AG04450 (cell line): ENCODE measurements at regions of chr12 and their contacts with region 1.

Region 1: GRCh38 chr12:49130151-49131050 is 794 bp downstream of the TUBA1B start:
- DNase-seq: peak; percentile 86
- H3K4me3 ChIP-seq: peak overlapping the region; percentile 90
- H3K27ac ChIP-seq: peak overlapping the region; percentile 98
- H3K27me3 ChIP-seq: no peaks in the 10 kb centered on the region
- CTCF ChIP-seq: peak; percentile 91

Region 2: DNA sequence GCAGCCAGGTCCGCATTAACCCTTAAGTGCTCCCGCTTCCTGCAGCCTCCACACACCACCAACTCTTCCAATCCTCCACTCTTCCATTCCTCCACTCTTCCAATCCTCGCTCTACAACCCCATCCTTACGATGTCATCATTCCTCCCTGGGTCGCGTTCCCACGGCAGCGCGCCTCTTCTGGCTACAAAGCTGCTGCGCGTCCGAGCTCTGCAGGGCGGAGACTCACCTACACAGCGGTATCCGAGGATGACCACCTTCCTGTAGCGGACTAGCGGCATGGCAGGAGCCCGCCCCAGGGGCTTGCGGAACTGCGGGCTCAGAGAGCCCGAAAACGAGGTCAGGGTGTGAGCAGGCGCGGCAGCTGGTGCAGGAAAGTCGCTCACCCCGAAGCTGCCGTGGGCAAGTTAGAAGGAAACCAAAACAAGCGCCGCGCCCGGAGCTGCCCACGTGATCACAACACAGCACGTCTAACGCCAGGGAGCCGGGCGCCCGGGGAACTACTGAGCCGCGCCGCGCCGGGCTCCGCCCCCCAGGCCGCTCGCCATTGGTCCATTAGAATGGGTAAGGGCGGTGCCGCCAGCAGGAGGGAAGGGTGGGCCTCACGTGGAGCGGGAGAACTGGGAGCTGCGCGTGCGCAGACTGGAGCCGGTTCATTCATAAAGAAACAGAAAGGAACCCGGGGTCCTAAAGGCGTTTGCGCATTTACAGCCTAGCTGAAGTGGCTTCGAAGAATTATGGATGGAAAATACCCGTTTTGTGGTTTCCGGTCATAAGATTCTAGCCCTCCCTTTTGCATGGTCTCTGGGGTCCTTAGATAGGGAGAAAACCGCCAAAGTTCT is 60.7 kb before region 1 on chr12 and contains the start of gene RHEBL1:
- CTCF ChIA-PET with region 1: interaction called, 4 read pairs
- POLR2A ChIA-PET with region 1: interaction called, 26 read pairs
- DNase-seq: peak; percentile 78
- H3K4me3 ChIP-seq: peak within 1 kb of the TSS; percentile 82
- H3K27ac ChIP-seq: peak within 1 kb of the TSS; percentile 70
- H3K27me3 ChIP-seq: no peaks in the 10 kb centered on the region
- CTCF ChIP-seq: peak; percentile 16; the same call in 1 of the 2 replicates
- polyA plus RNA-seq, gene RHEBL1: 0.31 and 0.51 TPM in 2 replicates

Region 3: GRCh38 chr12:49110464-49111155 is 19.8 kb before region 1 on chr12 and contains the start of gene LMBR1L:
- CTCF ChIA-PET with region 1: interaction called, 18 read pairs
- POLR2A ChIA-PET with region 1: interaction called, 32 read pairs
- DNase-seq: peak; percentile 95
- H3K4me3 ChIP-seq: peak within 1 kb of the TSS; percentile 82
- H3K27ac ChIP-seq: peak within 1 kb of the TSS; percentile 87
- H3K27me3 ChIP-seq: no peaks in the 10 kb centered on the region
- CTCF ChIP-seq: peak; percentile 59
- polyA plus RNA-seq, gene LMBR1L: 34.1 and 37.3 TPM in 2 replicates

Region 4: DNA sequence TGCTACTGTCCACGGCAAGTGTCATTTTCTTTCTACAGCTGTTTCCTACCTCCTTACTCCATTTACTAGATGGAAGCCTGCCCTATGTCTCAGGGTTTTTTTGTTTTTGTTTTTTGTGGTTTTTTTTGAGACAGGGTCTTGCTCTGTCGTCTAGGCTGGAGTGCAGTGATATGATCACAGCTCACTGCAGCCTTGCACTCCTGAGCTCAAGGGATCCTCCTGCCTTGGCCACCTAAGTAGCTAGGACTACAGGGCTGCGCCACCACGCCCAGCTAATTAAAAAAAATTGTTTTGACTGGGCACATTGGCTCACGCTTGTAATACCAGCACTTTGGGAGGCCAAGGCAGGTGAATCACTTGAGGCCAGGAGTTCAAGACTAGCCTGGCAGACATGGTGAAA is 43.8 kb after region 1 on chr12:
- CTCF ChIA-PET with region 1: interaction called, 3 read pairs
- POLR2A ChIA-PET with region 1: interaction called, 13 read pairs
- DNase-seq: no peak
- H3K4me3 ChIP-seq: no peak overlapping the region
- H3K27ac ChIP-seq: no peak overlapping the region
- H3K27me3 ChIP-seq: no peaks in the 10 kb centered on the region
- CTCF ChIP-seq: no peak

Region 5: DNA sequence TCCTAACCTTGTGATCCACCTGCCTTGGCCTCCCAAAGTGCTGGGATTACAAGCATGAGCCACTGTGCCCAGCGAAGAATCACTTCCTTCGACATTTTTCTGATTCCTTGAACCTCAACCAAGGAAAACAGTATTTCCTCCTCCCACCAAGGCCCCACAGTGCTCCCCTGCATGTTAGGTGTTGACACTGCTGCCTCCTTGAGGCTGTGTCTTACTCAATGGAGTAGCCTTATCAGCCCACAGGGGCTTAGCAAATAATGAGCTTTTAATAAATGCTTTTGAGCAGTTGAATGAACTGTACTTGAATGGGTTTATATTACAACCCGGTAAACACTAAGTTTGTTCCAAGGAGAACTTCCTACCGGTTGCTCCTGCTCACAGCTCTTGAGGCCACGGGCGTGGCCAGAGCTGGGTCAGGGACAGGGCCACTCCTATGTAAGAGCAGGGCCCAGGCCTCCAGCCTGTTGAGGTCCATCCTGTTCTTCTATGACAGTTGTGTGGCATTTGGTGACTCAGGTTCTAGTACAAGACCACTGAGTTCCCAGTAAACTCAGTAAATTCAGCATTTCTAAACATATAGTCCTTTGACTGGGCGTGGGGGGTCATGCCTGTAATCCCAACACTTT is 95.3 kb after region 1 on chr12:
- CTCF ChIA-PET with region 1: interaction called, 9 read pairs
- POLR2A ChIA-PET with region 1: interaction called, 30 read pairs
- DNase-seq: no peak
- H3K4me3 ChIP-seq: no peak overlapping the region
- H3K27ac ChIP-seq: no peak overlapping the region
- H3K27me3 ChIP-seq: no peaks in the 10 kb centered on the region
- CTCF ChIP-seq: peak; percentile 25; the same call in 1 of the 2 replicates

Region 6: DNA sequence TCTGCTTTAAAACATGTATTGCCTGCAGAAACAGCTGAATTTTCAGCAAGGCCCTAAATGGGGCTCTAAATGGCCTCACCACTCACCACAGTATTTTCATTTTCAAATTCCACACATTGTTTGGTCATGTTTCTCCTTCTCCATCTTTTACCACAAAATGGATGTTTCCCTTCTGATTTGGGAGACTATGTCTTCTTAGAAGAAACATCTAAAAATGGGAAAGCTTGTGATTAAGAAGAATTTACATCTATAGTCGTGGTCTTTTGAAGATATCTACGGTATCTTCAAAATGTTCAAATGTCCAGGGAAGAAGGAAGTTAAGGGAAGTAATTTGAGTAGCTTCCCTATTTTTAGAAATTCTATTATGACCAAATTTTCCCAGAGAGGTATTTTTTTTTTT is 113.8 kb after region 1 on chr12:
- CTCF ChIA-PET with region 1: interaction called, 9 read pairs
- POLR2A ChIA-PET with region 1: interaction called, 17 read pairs
- DNase-seq: no peak
- H3K4me3 ChIP-seq: no peak overlapping the region
- H3K27ac ChIP-seq: peak overlapping the region; percentile 47
- H3K27me3 ChIP-seq: no peaks in the 10 kb centered on the region
- CTCF ChIP-seq: no peak